Upper lobe of right lung (tissue), 1 donor: ENCODE measurements at regions of chr6 and their contacts with region 1.

Region 1: GRCh38 chr6:150940941-150941340 is 75.4 kb downstream of the MTHFD1L start:
- DNase-seq: no peak
- ATAC-seq: peak; percentile 58
- H3K4me3 ChIP-seq: no peak overlapping the region
- H3K27ac ChIP-seq: no peak overlapping the region
- H3K4me1 ChIP-seq: no peaks in the 10 kb centered on the region
- H3K27me3 ChIP-seq: no peaks in the 10 kb centered on the region
- CTCF ChIP-seq: no peak

Region 2: GRCh38 chr6:150822932-150823331 is 118.0 kb before region 1 on chr6:
- intact Hi-C with region 1: no loop called
- DNase-seq: no peak
- ATAC-seq: no peak
- H3K4me3 ChIP-seq: no peak overlapping the region
- H3K27ac ChIP-seq: no peak overlapping the region
- H3K4me1 ChIP-seq: no peaks in the 10 kb centered on the region
- H3K27me3 ChIP-seq: no peaks in the 10 kb centered on the region
- CTCF ChIP-seq: no peak

Region 3: DNA sequence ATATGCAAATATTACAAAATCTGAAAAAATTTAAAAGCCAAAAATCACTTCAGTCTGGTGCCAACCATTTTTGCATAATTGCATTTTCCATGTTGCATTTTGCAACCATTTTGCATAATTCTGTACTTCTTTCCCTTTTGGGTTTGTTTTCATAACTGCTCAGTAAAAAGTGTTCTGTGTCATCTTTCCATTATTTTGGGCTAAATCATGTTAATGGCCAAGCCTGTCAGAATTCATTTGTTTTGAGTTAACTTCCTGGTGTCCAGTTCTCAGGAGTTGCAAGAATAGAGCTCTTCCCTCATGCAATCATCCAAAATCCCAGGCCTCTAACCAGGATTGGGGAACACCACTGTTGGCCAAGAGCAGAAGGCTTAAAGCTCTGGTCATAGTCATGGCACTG is 58.2 kb after region 1 on chr6:
- intact Hi-C with region 1: loop called (anchors 10 kb)
- DNase-seq: no peak
- ATAC-seq: no peak
- H3K4me3 ChIP-seq: no peak overlapping the region
- H3K27ac ChIP-seq: no peak overlapping the region
- H3K4me1 ChIP-seq: peaks cover 4% of the 10 kb centered on the region
- H3K27me3 ChIP-seq: no peaks in the 10 kb centered on the region
- CTCF ChIP-seq: no peak